Testis (tissue), 5 donors: ENCODE measurements at regions of chr11 and their contacts with region 1.

Region 1: GRCh38 chr11:18634140-18635032 is at the start of gene SPTY2D1:
- DNase-seq: peak; percentile 100
- H3K4me3 ChIP-seq: peak within 1 kb of the TSS; percentile 77 to 82
- H3K27ac ChIP-seq: peak within 1 kb of the TSS; percentile 93 to 97
- H3K4me1 ChIP-seq: no peaks in the 10 kb centered on the region
- H3K27me3 ChIP-seq: no peaks in the 10 kb centered on the region
- CTCF ChIP-seq: peak in 1 of 3 experiments; percentile 28
- POLR2A ChIP-seq: peak; percentile 62
- total RNA-seq, gene SPTY2D1: 23.9 to 28.2 TPM

Region 2: GRCh38 chr11:18588297-18589252 is 45.8 kb before region 1 on chr11 and contains the start of gene UEVLD:
- intact Hi-C with region 1: loop called (anchors 10 kb)
- DNase-seq: peak; percentile 93
- H3K4me3 ChIP-seq: peak within 1 kb of the TSS; percentile 84 to 91
- H3K27ac ChIP-seq: peak within 1 kb of the TSS; percentile 77 to 80
- H3K4me1 ChIP-seq: peaks cover 23% of the 10 kb centered on the region
- H3K27me3 ChIP-seq: no peaks in the 10 kb centered on the region
- CTCF ChIP-seq: no peak
- POLR2A ChIP-seq: no peak
- total RNA-seq, gene UEVLD: 21.9 to 25.7 TPM